ENCODE measurements at regions of chr12 and their contacts with region 1.

Region 1: GRCh38 chr12:9673404-9674225 is 4.1 kb downstream of the CLEC2D start:
- DNase-seq: peak; percentile 89
- ATAC-seq: peak; percentile 47
- H3K4me3 Mint-ChIP-seq: peak overlapping the region; percentile 93
- H3K27ac Mint-ChIP-seq: peak overlapping the region; percentile 99
- H3K4me1 Mint-ChIP-seq: peaks cover 47% of the 10 kb centered on the region
- H3K27me3 Mint-ChIP-seq: no peaks in the 10 kb centered on the region

Region 2: GRCh38 chr12:9662500-9662899 is 11.1 kb before region 1 on chr12:
- CTCF ChIA-PET with region 1: no interaction called
- POLR2A ChIA-PET with region 1: interaction called, 12 read pairs
- intact Hi-C with region 1: no loop called
- DNase-seq: no peak
- ATAC-seq: peak; percentile 7
- H3K4me3 Mint-ChIP-seq: no peak overlapping the region
- H3K27ac Mint-ChIP-seq: peak overlapping the region; percentile 55
- H3K4me1 Mint-ChIP-seq: peaks cover 93% of the 10 kb centered on the region
- H3K27me3 Mint-ChIP-seq: no peaks in the 10 kb centered on the region

Region 3: GRCh38 chr12:9687228-9687627 is 13.6 kb after region 1 on chr12:
- CTCF ChIA-PET with region 1: interaction called, 5 read pairs
- POLR2A ChIA-PET with region 1: interaction called, 5 read pairs
- intact Hi-C with region 1: loop called in 1 of 2 experiments (anchors 2 kb)
- DNase-seq: no peak
- ATAC-seq: peak; percentile 68
- H3K4me3 Mint-ChIP-seq: no peak overlapping the region
- H3K27ac Mint-ChIP-seq: no peak overlapping the region
- H3K4me1 Mint-ChIP-seq: peaks cover 68% of the 10 kb centered on the region
- H3K27me3 Mint-ChIP-seq: no peaks in the 10 kb centered on the region

Region 4: GRCh38 chr12:9707864-9708808 is 34.5 kb after region 1 on chr12:
- CTCF ChIA-PET with region 1: interaction called, 13 read pairs
- POLR2A ChIA-PET with region 1: interaction called, 8 read pairs
- intact Hi-C with region 1: loop called (anchors 1 to 2 kb)
- DNase-seq: peak; percentile 82
- ATAC-seq: peak; percentile 85
- H3K4me3 Mint-ChIP-seq: peak overlapping the region; percentile 60
- H3K27ac Mint-ChIP-seq: peak overlapping the region; percentile 94
- H3K4me1 Mint-ChIP-seq: peaks cover 50% of the 10 kb centered on the region
- H3K27me3 Mint-ChIP-seq: no peaks in the 10 kb centered on the region

Region 5: DNA sequence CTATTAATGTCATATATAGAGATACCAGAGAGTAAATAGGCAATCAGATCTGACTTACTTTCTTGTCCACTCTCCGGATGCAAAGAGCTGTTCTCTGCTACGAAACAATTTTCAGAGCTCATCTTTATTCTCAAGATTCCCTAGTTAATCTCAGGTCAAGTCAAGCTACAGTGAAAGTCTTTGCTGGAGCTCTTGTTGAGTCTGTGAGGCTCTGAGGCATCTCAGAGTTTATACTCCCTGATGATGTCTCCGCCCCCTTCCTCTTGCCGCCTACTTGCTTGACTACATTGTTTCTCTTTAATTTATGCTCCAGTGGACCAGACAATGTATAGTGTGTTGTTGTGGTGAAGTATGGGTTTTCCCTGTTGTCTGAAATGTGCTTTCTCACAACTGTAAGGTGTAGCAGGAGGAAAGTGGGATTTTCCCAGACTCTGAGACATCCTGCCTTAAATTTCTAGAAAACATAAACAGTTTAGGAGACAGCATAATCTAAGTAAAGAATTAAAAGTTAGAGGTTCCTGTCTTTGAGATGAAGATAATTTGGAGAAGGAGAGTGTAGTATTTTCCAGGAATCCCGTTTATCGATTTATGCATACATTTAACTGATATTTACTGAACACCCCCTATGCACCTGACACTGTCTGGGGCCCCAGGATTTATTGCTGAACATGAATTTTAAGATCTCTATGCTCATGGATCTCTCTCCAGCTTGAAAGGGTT is 87.2 kb after region 1 on chr12 and contains the start of gene CD69:
- CTCF ChIA-PET with region 1: interaction called, 10 read pairs
- POLR2A ChIA-PET with region 1: interaction called, 96 read pairs
- intact Hi-C with region 1: loop called (anchors 1 kb)
- DNase-seq: peak; percentile 87
- ATAC-seq: peak; percentile 55
- H3K4me3 Mint-ChIP-seq: peak within 1 kb of the TSS; percentile 99
- H3K27ac Mint-ChIP-seq: peak within 1 kb of the TSS; percentile 100
- H3K4me1 Mint-ChIP-seq: peaks cover 49% of the 10 kb centered on the region
- H3K27me3 Mint-ChIP-seq: no peaks in the 10 kb centered on the region
- total RNA-seq, gene CD69: 97.9 to 127 TPM

Region 6: DNA sequence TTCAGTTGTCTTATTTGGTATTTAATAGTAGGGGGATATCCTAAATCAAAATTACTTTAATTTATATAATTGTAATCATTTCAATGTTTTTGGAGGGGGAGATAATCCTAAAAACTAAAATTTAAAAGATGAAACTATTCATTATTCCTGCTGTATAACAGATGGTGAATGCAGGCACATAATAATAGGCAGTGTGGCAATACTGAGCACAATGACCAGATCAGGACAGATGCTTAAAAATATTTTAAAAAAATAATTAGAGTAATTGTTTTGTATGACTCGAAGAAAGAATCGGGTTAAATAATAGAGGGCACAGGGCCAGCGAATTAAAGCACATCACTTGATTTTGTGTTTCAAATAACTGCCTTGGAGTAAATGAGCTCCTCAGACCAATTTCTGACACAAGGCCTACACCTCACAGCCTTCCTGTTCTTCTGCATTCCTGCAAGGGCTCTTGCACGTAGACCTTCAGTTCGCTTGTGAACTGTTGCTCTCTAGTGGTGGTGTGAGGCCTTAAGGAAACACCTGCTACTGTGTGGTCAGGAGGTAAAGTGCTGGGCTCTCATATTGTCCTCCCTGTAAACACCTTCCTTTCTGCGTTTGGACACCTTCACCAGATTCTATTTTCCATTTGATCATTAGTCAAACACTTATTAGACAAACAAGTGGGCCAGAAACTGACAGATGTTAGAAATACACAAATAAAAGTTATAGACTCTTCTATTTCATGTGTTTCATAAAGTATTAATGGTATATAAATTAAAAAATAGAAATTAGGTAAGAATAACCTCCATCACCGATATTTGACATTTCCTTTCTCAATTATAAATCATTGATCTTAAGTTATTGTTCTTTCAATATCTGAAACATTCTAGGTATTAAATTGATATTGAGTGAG is 124.4 kb after region 1 on chr12:
- CTCF ChIA-PET with region 1: interaction called, 4 read pairs
- POLR2A ChIA-PET with region 1: interaction called, 15 read pairs
- intact Hi-C with region 1: loop called (anchors 1 kb)
- DNase-seq: peak; percentile 81
- ATAC-seq: peak; percentile 84
- H3K4me3 Mint-ChIP-seq: peak overlapping the region; percentile 72
- H3K27ac Mint-ChIP-seq: peak overlapping the region; percentile 92
- H3K4me1 Mint-ChIP-seq: peaks cover 42% of the 10 kb centered on the region
- H3K27me3 Mint-ChIP-seq: no peaks in the 10 kb centered on the region